Prostate gland (tissue), 2 donors: ENCODE measurements at regions of chr11 and their contacts with region 1.

Region 1: DNA sequence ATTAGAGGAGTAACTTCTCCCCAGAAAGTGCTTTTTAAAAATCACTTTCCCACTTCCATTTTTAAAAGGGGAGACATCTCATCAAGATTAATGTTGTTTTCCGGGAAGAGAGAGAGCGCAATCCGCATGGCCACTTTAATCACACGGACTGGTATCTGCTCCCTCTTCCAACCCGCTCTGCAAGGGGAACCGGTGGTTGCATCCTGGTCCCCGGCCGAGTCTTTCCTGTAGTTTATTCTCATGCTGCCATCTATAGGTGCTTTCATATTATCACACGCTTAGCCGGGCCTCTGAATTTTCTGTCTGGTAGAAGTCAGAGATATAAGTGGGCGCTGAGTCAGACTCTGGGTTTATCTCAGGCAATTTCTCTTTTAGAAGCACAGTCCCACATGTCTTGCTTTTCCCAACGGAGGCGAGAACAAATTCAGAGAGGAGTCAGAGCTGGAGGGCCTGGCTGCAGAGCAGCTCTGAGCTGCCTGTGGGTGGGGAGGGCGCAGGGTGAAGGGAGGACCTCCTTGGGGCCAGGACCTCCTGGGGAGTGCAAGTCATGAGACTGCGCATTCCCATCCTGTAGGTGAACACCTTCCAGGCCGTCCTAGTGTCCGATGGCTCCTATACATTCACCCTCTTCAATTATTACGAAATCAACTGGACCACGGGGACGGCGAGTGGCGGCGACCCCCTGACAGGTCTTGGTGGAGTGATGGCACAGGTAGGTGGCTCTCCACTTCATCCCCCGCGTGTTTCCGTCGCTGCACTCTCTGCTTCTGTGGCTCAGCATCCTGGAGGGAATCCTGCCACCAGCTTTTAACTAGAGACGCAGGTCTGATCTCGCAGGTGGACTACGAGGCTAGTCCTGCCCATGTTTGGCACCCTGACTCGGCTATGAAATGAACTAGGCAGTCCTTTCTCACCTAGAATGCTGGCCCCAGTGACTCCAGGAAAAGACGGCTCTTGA is 11.7 kb downstream of the TECTA start:
- DNase-seq: peak; percentile 67
- H3K4me3 ChIP-seq: no peak overlapping the region
- H3K27ac ChIP-seq: no peak overlapping the region
- H3K4me1 ChIP-seq: no peaks in the 10 kb centered on the region
- H3K27me3 ChIP-seq: no peaks in the 10 kb centered on the region
- CTCF ChIP-seq: peak in 3 of 4 experiments; percentile 38 to 69 (median 64)
- POLR2A ChIP-seq: no peak

Region 2: DNA sequence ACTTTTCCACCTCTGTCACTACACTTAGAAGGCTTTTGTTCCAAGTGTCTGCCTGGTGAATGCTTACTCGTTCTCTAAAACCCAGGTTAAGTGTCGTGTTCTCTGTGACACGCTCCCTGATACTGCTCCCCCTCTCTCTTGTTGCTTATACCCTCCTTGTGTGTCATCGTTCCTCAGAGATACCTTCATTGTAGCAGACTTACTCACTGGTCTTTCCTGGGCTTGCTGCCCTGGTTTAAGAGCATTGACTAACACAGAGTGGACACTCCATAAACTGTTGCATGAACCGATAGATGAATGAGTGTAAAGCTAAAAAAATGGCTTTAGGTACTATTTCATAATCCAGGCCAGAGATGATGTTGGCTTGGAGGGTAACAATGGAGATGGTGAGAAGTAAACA is 429.9 kb before region 1 on chr11:
- intact Hi-C with region 1: loop called (anchors 10 kb)
- DNase-seq: no peak
- H3K4me3 ChIP-seq: no peak overlapping the region
- H3K27ac ChIP-seq: no peak overlapping the region
- H3K4me1 ChIP-seq: no peaks in the 10 kb centered on the region
- H3K27me3 ChIP-seq: no peaks in the 10 kb centered on the region
- CTCF ChIP-seq: no peak
- POLR2A ChIP-seq: no peak

Region 3: GRCh38 chr11:120952461-120953434 is 160.0 kb before region 1 on chr11:
- intact Hi-C with region 1: loop called (anchors 10 kb)
- DNase-seq: peak; percentile 74
- H3K4me3 ChIP-seq: no peak overlapping the region
- H3K27ac ChIP-seq: no peak overlapping the region
- H3K4me1 ChIP-seq: no peaks in the 10 kb centered on the region
- H3K27me3 ChIP-seq: no peaks in the 10 kb centered on the region
- CTCF ChIP-seq: peak; percentile 56 to 88 (median 78)
- POLR2A ChIP-seq: no peak

Region 4: DNA sequence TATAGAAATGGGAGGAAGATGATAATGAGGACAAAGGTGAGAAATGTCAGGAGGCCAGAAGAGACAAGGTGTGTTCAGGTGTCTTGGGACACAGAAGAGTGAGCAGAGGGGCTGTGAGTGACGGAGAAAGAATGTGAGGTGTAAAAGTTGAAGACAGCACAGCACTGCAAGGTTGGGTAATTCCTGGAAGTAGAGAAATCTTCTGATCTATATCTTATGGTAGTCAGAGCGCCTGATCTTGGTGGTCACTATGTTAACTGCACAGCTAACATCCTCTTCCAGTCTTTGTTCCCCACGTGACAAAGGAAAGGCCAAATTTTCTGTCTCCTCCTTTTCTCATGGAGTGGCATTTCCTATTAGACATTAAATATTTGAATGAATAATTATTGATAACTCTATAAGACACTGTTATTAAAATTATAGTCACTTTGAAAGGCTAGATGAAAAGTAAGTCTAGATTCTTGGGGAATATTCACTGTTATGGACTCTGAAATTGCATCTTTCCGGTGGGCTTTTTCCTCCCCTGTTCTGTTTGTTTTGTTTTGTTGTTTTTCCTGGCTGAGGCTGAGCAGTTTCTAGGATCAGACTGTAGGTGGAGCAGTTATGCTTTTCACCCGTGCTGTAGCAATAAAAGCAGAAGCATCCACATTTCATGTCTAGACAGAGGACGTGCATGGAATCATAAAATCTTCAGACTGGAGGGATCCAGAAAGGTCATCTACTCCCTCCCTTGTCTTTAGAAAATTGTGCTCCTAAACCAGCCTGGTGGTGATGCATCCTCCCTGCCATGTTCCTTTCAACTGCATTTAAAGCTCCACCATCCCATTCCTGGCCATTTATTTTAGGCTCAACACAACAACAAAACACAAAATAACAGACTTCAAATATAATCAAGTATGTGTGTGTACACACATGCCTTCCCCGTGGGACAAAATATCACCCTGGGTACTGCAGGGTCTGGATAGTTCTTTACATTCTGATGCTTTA is 206.4 kb after region 1 on chr11:
- intact Hi-C with region 1: no loop called
- DNase-seq: peak; percentile 47
- H3K4me3 ChIP-seq: no peak overlapping the region
- H3K27ac ChIP-seq: no peak overlapping the region
- H3K4me1 ChIP-seq: no peaks in the 10 kb centered on the region
- H3K27me3 ChIP-seq: no peaks in the 10 kb centered on the region
- CTCF ChIP-seq: peak; percentile 55 to 88 (median 74)
- POLR2A ChIP-seq: no peak